OCI-LY7 (cell line): ENCODE measurements at regions of chr12 and their contacts with region 1.

Region 1: DNA sequence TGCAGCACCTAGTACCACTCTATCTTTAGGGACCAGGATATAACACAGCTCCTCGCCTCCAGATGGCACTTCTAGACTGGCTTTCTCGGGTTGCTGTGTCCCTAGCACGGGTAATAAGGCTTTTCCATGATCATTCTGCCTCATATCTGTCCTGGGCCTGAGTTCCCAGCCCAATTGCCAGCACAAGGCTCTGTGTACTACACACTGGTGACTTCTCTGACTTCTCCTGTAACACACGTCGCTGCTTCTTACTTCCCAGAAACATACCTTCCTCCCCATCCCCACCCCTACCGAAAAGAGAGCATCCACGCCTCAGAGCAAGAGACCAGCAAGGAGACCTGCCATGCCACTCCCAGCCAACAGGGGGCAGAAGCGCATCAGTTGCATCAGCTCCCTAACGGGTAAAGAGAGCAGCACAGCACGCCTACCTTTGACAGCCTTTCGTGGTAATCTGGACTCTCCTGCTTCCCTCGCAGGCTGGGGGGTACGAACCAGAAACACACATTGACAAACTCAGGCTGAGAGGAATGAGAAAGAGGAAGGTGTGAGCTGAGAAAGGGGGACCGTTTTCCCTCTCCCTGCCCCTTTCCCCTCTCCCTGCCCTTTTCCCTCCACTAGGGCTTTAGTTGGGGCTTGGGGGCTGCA is 21.2 kb upstream of the ZNF740 start:
- DNase-seq: peak; percentile 92
- H3K4me3 ChIP-seq: peak overlapping the region; percentile 41
- H3K27ac ChIP-seq: no peak overlapping the region
- H3K4me1 ChIP-seq: peaks cover 11% of the 10 kb centered on the region
- CTCF ChIP-seq: peak; percentile 99

Region 2: GRCh38 chr12:53190108-53190729 is 30.9 kb after region 1 on chr12:
- CTCF ChIA-PET with region 1: interaction called, 4 read pairs
- POLR2A ChIA-PET with region 1: interaction called, 3 read pairs
- intact Hi-C with region 1: loop called (anchors 1 kb)
- DNase-seq: peak; percentile 57
- H3K4me3 ChIP-seq: no peak overlapping the region
- H3K27ac ChIP-seq: no peak overlapping the region
- H3K4me1 ChIP-seq: peaks cover 4% of the 10 kb centered on the region
- CTCF ChIP-seq: peak; percentile 81

Region 3: DNA sequence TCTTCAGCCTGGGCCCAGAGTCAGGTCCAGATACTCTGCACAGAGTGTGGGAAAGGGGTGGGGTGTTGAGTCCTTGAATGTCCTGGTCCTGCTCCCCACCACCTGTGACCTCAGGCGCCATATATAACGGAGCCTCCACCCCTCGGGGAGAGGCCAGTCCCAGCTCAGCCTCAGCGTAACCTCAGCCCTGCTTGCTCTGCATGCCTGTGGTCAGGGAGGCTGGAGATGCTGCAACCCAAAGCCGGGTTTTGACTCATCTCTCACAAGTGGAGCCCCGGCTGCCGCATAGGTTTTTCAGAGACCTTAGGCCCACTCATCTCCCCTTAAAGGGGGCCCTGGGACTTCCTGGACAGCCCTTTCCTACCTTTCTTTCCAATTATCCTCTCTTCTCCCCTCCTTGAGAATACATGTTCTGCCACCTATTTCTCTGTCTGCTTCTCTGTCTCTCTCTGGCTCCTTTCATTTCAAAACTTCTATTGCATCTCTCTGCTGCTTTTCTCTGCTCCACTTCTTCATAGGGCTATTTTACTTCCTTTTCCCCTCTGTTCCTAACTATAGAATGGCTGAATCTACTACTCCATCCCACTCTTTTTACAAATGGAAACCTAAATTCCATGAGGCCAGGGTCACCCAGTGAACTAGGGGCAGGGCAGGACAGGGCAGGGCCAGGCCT is 46.6 kb after region 1 on chr12:
- CTCF ChIA-PET with region 1: interaction called, 6 read pairs
- POLR2A ChIA-PET with region 1: interaction called, 12 read pairs
- intact Hi-C with region 1: loop called (anchors 2 kb)
- DNase-seq: peak; percentile 74
- H3K4me3 ChIP-seq: peak overlapping the region; percentile 83
- H3K27ac ChIP-seq: peak overlapping the region; percentile 98
- H3K4me1 ChIP-seq: peaks cover 79% of the 10 kb centered on the region
- CTCF ChIP-seq: no peak

Region 4: DNA sequence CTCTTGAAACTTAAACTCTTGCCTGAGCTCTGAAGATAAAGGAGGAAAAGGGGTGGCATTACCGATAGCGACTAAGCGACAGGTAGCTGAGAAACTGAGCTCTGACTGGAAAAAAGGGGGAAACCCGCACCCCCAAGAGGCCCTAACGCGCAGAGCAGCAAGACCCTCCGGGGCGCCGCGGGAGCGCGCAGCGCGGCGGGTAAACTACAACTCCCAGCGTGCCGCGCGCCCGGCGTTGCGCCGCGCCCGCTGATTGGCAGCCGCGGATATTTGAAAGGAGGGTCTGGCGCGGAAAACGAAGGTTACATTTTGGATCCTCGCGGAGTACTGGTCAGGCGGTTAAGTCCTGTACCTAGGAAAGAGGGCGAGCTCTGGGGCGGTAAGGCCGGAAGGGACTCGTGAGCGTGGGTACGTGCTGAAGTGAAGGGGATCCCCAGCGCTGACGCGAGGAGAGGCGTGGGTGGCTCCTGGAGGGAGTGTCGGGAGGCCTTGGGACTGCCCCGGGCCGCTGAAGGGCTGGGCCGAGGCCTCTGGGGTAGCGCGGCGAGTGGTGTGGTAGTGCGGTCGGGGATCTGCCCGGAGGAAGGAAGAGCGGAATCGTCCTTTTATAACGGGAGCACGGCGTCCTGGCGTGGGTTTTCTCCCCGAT is 108.8 kb after region 1 on chr12 and contains the start of gene ESPL1:
- CTCF ChIA-PET with region 1: interaction called, 6 read pairs
- POLR2A ChIA-PET with region 1: interaction called, 13 read pairs
- intact Hi-C with region 1: loop called (anchors 1 kb)
- DNase-seq: peak; percentile 94
- H3K4me3 ChIP-seq: peak within 1 kb of the TSS; percentile 87
- H3K27ac ChIP-seq: peak within 1 kb of the TSS; percentile 56
- H3K4me1 ChIP-seq: peaks cover 31% of the 10 kb centered on the region
- CTCF ChIP-seq: peak; percentile 83
- total RNA-seq, gene ESPL1: 77.4 and 78.2 TPM in 2 replicates

Region 5: GRCh38 chr12:53344824-53345485 is 185.6 kb after region 1 on chr12:
- CTCF ChIA-PET with region 1: interaction called, 7 read pairs
- POLR2A ChIA-PET with region 1: interaction called, 6 read pairs
- intact Hi-C with region 1: loop called (anchors 1 kb)
- DNase-seq: peak; percentile 80
- H3K4me3 ChIP-seq: peak overlapping the region; percentile 65
- H3K27ac ChIP-seq: no peak overlapping the region
- H3K4me1 ChIP-seq: peaks cover 21% of the 10 kb centered on the region
- CTCF ChIP-seq: peak; percentile 91